OCI-LY7 (cell line): ENCODE measurements at regions of chr2 and their contacts with region 1.

Region 1: DNA sequence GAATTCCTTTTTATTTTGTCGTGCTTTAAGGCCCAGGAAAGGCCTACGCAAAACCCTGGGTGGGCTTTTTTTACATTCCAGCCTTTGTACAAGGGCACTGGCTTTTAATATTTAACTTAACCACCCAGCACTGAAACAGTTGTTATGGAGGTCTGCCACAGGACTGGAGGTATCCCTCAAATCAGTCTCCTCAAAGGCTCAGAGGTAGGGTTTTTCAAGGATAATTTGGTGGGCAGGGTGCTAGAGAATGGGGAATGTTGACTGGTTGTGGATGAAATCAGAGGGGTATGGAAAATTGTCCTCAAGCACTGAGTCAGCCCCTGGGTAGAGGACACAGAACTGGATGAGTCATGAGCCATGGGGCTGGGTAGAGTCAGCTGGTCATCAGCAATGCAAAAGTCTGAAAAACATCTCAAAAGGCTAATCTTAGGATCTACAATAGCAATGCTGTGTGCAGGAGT is 443.1 kb downstream of the THSD7B start:
- DNase-seq: no peak
- H3K4me3 ChIP-seq: no peak overlapping the region
- H3K27ac ChIP-seq: no peak overlapping the region
- H3K4me1 ChIP-seq: peaks cover 25% of the 10 kb centered on the region
- CTCF ChIP-seq: no peak

Region 2: GRCh38 chr2:137194111-137194510 is 14.3 kb before region 1 on chr2:
- CTCF ChIA-PET with region 1: no interaction called
- POLR2A ChIA-PET with region 1: interaction called, 19 read pairs
- intact Hi-C with region 1: no loop called
- DNase-seq: no peak
- H3K4me3 ChIP-seq: no peak overlapping the region
- H3K27ac ChIP-seq: no peak overlapping the region
- H3K4me1 ChIP-seq: no peaks in the 10 kb centered on the region
- CTCF ChIP-seq: no peak

Region 3: GRCh38 chr2:137220438-137220993 is 12.1 kb after region 1 on chr2:
- CTCF ChIA-PET with region 1: interaction called, 3 read pairs
- POLR2A ChIA-PET with region 1: interaction called, 10 read pairs
- intact Hi-C with region 1: no loop called
- DNase-seq: no peak
- H3K4me3 ChIP-seq: no peak overlapping the region
- H3K27ac ChIP-seq: no peak overlapping the region
- H3K4me1 ChIP-seq: peaks cover 8% of the 10 kb centered on the region
- CTCF ChIP-seq: no peak

Region 4: DNA sequence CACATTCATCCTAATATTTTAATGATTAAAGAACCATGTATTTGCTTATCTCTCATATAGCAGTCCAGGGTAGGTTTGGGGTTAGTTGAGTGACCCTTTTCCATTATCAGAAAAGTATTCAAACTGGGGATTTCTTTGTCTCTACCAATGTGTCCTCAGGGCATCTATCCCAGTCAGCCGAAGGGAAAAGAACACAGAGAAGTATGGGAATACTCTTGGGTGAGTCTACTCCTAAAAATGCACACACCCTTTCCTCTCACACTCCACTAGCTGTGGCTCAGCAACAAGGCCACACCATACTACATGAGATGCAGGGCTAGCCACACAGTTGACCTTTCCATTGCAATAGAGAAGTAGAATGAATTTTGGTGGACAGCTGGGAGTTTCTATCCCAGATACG is 1457.5 kb after region 1 on chr2:
- CTCF ChIA-PET with region 1: no interaction called
- POLR2A ChIA-PET with region 1: no interaction called
- intact Hi-C with region 1: no loop called
- DNase-seq: no peak
- H3K4me3 ChIP-seq: no peak overlapping the region
- H3K27ac ChIP-seq: no peak overlapping the region
- H3K4me1 ChIP-seq: no peaks in the 10 kb centered on the region
- CTCF ChIP-seq: no peak